ENCODE measurements at regions of chr1 and their contacts with region 1.

Region 1: GRCh38 chr1:39258146-39258924 is 53.8 kb downstream of the MACF1 start:
- DNase-seq: peak; percentile 67
- CTCF ChIP-seq: peak; percentile 76

Region 2: DNA sequence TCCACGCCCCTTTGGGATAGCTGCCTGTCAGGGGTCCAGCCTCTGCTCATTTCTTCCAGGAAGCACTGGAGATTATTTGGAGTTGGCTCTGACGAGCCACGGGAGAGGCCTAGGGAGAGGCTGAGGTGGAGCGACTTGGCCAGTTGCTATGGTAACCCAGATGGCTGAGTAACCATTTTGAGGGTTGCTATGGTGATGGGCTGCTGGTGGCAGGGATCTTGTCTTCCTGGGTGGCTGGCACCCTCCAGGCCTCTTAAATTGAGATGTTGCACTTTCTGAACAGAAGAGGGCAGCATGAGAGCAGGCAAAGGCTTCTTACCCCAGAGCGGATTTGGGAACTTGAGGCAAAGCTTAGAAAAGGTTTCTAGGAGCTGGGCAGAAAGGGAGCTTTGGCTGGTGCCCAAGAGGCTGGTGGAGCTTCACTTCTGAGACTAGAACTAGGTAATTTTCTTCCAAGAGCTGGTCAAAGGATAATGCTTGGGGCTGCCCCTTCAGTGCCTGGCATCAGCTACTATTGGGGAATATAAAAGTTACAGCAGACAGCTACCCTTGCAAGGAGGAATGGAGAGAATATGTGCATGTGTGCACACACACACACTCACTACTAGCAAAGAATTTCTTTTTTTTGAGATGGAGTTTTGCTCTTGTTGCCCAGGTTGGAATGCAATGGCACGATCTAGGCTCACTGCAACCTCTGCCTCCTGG is 159.6 kb before region 1 on chr1:
- CTCF ChIA-PET with region 1: interaction called, 126 read pairs
- POLR2A ChIA-PET with region 1: no interaction called
- DNase-seq: peak; percentile 81
- CTCF ChIP-seq: peak; percentile 84

Region 3: GRCh38 chr1:39110325-39110851 is 147.9 kb before region 1 on chr1:
- CTCF ChIA-PET with region 1: interaction called, 16 read pairs
- POLR2A ChIA-PET with region 1: no interaction called
- DNase-seq: no peak
- CTCF ChIP-seq: no peak

Region 4: DNA sequence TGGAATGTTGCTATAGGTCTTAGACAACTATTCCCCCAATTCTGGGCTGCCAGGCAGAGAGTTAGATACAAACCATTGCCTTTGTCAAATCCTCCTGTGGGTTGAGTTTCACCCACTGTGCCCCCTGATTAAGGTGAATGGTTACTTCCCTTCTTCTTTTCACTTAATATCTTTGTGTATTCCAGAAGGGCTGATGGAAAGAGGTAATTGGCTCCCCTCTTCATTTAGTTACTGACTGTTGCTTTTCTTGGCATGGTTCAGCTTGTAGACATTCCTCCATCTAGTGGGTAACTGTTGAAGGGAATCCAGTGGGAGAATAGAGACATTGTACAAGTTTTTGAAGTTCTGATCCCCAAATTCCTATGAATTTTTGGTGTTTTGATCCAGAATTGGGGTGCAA is 97.6 kb before region 1 on chr1:
- CTCF ChIA-PET with region 1: no interaction called
- POLR2A ChIA-PET with region 1: no interaction called
- DNase-seq: no peak
- CTCF ChIP-seq: no peak

Region 5: DNA sequence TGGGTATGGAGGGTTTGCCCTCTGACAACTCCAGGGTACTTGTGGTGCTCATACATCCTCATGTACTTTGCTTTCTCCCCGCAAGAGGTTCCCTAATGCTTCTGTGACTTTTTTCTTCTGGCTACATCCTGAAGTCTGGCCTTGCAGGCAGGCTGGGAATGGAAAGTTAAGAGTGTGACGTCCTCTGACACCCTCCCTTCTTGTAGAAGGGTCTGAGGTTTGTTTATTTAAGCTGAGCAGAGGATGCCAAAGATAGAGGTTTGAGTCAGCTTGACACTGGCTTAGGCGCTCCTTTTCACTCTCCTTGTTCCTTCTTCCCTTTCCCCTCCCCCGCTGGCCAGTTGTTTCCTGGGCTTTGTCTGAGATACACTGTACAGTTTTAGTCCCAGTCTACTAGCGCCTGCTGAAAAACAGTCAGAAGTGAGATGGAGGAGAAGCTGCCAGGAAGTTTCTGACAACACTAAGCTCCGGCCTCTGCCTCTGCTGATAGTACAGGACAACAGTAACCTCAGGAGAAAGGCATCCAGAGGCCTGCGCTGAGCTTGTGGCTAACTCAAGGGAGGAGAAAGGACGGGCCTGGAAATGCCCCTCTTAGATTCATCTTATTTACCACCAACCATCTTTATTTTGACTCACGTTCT is 53.8 kb before region 1 on chr1 and contains the start of gene MACF1:
- CTCF ChIA-PET with region 1: interaction called, 19 read pairs
- POLR2A ChIA-PET with region 1: no interaction called
- DNase-seq: no peak
- CTCF ChIP-seq: no peak

Region 6: DNA sequence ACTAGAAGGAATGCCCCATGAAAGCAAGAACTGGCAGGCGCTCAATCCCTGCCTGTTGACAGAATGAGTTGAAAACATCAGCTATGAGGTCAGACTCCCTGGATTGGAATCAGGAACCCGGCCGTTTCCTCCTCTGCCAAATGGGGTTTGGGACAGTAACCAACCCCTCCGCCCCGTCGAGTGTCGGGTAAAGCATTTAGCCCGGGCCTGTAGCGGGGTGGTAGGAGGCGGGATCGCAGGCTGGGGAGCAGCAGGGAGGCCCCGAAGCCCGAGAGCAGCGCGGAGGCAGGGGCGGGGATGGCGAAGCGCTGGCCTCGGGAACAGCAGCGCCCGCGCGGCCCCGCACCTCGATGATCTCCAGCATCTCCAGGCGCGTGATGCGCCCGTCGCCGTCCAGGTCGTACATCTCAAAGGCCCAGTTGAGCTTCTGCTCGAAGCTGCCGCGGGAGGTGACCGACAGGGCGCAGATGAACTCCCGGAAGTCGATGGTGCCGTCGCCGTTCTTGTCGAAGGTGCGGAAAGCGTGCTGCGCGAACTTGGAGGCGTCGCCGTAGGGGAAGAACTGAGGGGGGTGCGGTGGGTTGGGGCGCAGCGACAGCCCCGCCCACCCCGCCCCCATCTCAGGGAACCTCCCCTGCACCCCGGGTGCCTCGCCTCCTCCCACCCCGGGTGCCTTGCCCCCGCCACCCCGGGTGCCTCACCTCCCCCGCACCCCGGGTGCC is 425.4 kb after region 1 on chr1:
- CTCF ChIA-PET with region 1: no interaction called
- POLR2A ChIA-PET with region 1: no interaction called
- DNase-seq: no peak
- CTCF ChIP-seq: no peak

Measured in GM10248 (cell line).